ENCODE measurements at regions of chr9 and their contacts with region 1.

Region 1: GRCh38 chr9:13570068-13570974 is 290.8 kb upstream of the MPDZ start:
- DNase-seq: no peak
- ATAC-seq: no peak
- H3K4me3 ChIP-seq: no peak overlapping the region
- H3K27ac ChIP-seq: no peak overlapping the region
- H3K4me1 ChIP-seq: no peaks in the 10 kb centered on the region
- H3K27me3 ChIP-seq: no peaks in the 10 kb centered on the region
- CTCF ChIP-seq: no peak

Region 2: GRCh38 chr9:13524245-13524644 is 46.1 kb before region 1 on chr9:
- CTCF ChIA-PET with region 1: no interaction called
- POLR2A ChIA-PET with region 1: no interaction called
- in situ Hi-C with region 1: no loop called
- intact Hi-C with region 1: loop called (anchors 5 kb)
- DNase-seq: no peak
- ATAC-seq: no peak
- H3K4me3 ChIP-seq: no peak overlapping the region
- H3K27ac ChIP-seq: no peak overlapping the region
- H3K4me1 ChIP-seq: no peaks in the 10 kb centered on the region
- H3K27me3 ChIP-seq: no peaks in the 10 kb centered on the region
- CTCF ChIP-seq: no peak

Region 3: DNA sequence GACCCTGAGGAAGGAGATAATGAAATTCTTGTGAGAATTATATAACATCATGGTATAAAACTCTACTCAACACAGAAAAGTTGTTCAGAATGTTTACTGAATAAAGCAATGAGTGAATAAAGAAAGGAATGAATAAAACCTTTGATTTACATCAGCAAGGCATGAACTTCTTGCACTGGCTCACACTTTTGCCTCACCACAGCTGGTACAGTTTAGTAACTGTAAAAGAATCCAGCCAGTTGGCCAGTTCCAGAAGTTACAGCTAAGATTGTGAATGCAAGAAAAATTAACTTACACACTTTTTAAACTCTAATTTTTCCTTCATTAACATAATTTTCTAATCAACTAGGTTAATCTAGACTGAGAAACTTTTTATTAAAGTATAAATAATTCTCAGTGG is 252.7 kb after region 1 on chr9:
- CTCF ChIA-PET with region 1: no interaction called
- POLR2A ChIA-PET with region 1: no interaction called
- in situ Hi-C with region 1: no loop called
- intact Hi-C with region 1: no loop called
- DNase-seq: no peak
- ATAC-seq: no peak
- H3K4me3 ChIP-seq: no peak overlapping the region
- H3K27ac ChIP-seq: no peak overlapping the region
- H3K4me1 ChIP-seq: no peaks in the 10 kb centered on the region
- H3K27me3 ChIP-seq: no peaks in the 10 kb centered on the region
- CTCF ChIP-seq: no peak

Region 4: GRCh38 chr9:13939134-13939533 is 368.8 kb after region 1 on chr9:
- CTCF ChIA-PET with region 1: no interaction called
- POLR2A ChIA-PET with region 1: no interaction called
- in situ Hi-C with region 1: no loop called
- intact Hi-C with region 1: no loop called
- DNase-seq: no peak
- ATAC-seq: no peak
- H3K4me3 ChIP-seq: no peak overlapping the region
- H3K27ac ChIP-seq: no peak overlapping the region
- H3K4me1 ChIP-seq: no peaks in the 10 kb centered on the region
- H3K27me3 ChIP-seq: no peaks in the 10 kb centered on the region
- CTCF ChIP-seq: no peak